H1 (cell line): ENCODE measurements at regions of chr12 and their contacts with region 1.

Region 1: GRCh38 chr12:55659486-55660385 is 23.0 kb downstream of the OR10P1 start:
- DNase-seq: no peak
- H3K4me3 ChIP-seq: no peak overlapping the region
- H3K27ac ChIP-seq: no peak overlapping the region
- H3K4me1 ChIP-seq: no peaks in the 10 kb centered on the region
- H3K27me3 ChIP-seq: no peaks in the 10 kb centered on the region; a peak in 2 of 7 replicates
- CTCF ChIP-seq: peak; percentile 46 to 68 (median 66)
- EP300 ChIP-seq: no peak
- POLR2A ChIP-seq: no peak
- RAD21 ChIP-seq: peak; percentile 80 to 86

Region 2: GRCh38 chr12:55572168-55572567 is 87.6 kb before region 1 on chr12 and contains the start of gene OR2AP1:
- CTCF ChIA-PET with region 1: no interaction called
- POLR2A ChIA-PET with region 1: no interaction called
- DNase-seq: no peak
- H3K4me3 ChIP-seq: no peak within 1 kb of the TSS
- H3K27ac ChIP-seq: no peak within 1 kb of the TSS
- H3K4me1 ChIP-seq: no peaks in the 10 kb centered on the region
- H3K27me3 ChIP-seq: no peaks in the 10 kb centered on the region
- CTCF ChIP-seq: no peak
- EP300 ChIP-seq: no peak
- POLR2A ChIP-seq: no peak
- RAD21 ChIP-seq: no peak
- total RNA-seq, gene OR2AP1: not detected in 2 replicates

Region 3: GRCh38 chr12:55629058-55629841 is 30.5 kb before region 1 on chr12:
- CTCF ChIA-PET with region 1: interaction called, 12 read pairs
- POLR2A ChIA-PET with region 1: no interaction called
- DNase-seq: no peak
- H3K4me3 ChIP-seq: no peak overlapping the region
- H3K27ac ChIP-seq: no peak overlapping the region
- H3K4me1 ChIP-seq: no peaks in the 10 kb centered on the region
- H3K27me3 ChIP-seq: no peaks in the 10 kb centered on the region
- CTCF ChIP-seq: no peak
- EP300 ChIP-seq: no peak
- POLR2A ChIP-seq: no peak
- RAD21 ChIP-seq: no peak

Region 4: DNA sequence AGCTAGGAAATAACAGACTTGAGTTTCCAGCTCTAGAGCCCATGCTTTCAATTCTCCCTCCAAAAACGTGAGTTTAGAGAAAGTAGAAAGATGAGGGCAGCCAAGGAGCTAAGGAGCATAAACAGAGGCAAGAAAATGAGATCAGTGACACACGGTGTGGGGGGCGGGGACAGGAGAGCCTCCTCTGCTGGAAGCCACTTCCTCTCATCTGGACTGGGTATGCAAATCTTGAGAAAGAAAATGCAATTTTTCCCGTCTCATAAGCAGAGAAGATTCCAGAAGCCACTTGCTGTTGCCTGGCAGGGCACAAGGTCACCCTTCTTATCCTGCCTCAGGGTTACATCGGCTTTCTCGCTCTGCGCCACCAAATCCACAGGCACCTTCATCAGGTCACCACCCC is 17.1 kb before region 1 on chr12:
- CTCF ChIA-PET with region 1: interaction called, 58 read pairs
- POLR2A ChIA-PET with region 1: no interaction called
- DNase-seq: no peak
- H3K4me3 ChIP-seq: no peak overlapping the region
- H3K27ac ChIP-seq: no peak overlapping the region
- H3K4me1 ChIP-seq: peaks cover 0 to 4% (median 3%) of the 10 kb centered on the region in 4 experiments; a peak in 4 of 7 replicates
- H3K27me3 ChIP-seq: no peaks in the 10 kb centered on the region
- CTCF ChIP-seq: no peak
- EP300 ChIP-seq: no peak
- POLR2A ChIP-seq: no peak
- RAD21 ChIP-seq: no peak

Region 5: DNA sequence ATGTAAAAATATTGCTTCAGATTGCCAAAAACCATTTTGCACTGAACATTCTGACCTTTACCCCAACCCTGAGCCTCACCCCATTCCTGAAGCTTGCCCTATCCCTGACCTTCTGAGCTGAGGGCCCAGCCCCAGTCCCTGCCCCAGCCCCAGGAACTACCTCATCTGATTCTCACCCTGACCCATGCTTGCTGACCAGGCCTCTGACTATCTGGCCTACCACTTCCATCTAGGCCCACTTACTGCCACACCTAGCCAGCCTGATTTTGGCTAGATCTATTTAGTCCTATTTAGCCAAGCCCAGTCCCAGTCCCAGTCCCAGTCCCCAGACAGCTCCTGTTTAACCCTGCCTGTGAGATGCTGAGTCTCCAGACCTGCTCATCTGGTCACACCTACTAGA is 10.5 kb after region 1 on chr12:
- CTCF ChIA-PET with region 1: interaction called, 37 read pairs
- POLR2A ChIA-PET with region 1: no interaction called
- DNase-seq: no peak
- H3K4me3 ChIP-seq: no peak overlapping the region
- H3K27ac ChIP-seq: no peak overlapping the region
- H3K4me1 ChIP-seq: no peaks in the 10 kb centered on the region
- H3K27me3 ChIP-seq: no peaks in the 10 kb centered on the region; a peak in 1 of 7 replicates
- CTCF ChIP-seq: no peak
- EP300 ChIP-seq: no peak
- POLR2A ChIP-seq: no peak
- RAD21 ChIP-seq: no peak

Region 6: DNA sequence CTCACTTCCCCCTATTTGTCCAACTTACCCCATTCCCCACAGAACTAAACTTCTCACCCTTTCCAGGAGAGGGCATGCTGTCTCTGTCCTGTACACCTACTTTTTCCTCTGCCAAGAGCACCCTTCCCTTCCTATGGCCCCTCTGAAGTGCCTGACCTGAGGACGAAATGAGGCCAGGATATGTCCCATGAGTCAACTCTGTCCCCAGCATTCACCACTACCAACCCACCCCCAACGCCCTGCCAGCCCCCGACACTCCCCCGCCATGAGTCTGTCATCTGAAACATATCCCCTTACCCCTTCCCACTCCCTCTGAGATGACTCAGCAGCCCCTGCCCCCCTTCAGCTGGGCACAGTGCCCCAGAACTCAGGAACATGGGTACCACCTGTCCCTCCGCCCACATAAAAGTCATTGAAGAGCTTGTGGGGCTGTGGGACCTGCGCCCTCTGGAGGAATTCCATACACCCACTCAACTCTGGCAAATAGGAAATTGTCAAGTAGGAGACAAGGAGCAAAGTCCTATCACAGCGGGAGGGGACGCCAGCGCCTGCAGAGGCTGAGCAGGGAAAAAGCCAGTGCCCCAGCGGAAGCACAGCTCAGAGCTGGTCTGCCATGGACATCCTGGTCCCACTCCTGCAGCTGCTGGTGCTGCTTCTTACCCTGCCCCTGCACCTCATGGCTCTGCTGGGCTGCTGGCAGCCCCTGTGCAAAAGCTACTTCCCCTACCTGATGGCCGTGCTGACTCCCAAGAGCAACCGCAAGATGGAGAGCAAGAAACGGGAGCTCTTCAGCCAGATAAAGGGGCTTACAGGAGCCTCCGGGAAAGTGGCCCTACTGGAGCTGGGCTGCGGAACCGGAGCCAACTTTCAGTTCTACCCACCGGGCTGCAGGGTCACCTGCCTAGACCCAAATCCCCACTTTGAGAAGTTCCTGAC is 21.7 kb after region 1 on chr12:
- CTCF ChIA-PET with region 1: interaction called, 13 read pairs
- POLR2A ChIA-PET with region 1: interaction called, 4 read pairs
- DNase-seq: peak; percentile 61 to 83
- H3K4me3 ChIP-seq: peak overlapping the region in 3 of 4 experiments; percentile 6 to 44 (median 21); a peak in 5 of 8 replicates
- H3K27ac ChIP-seq: no peak overlapping the region
- H3K4me1 ChIP-seq: peaks cover 0 to 12% (median 5%) of the 10 kb centered on the region in 4 experiments; a peak in 4 of 7 replicates
- H3K27me3 ChIP-seq: no peaks in the 10 kb centered on the region
- CTCF ChIP-seq: peak; percentile 60 to 68 (median 61)
- EP300 ChIP-seq: no peak
- POLR2A ChIP-seq: peak in 1 of 2 experiments; percentile 54; a peak in 2 of 3 replicates
- RAD21 ChIP-seq: peak; percentile 25 to 48; a peak in 3 of 4 replicates

Region 7: DNA sequence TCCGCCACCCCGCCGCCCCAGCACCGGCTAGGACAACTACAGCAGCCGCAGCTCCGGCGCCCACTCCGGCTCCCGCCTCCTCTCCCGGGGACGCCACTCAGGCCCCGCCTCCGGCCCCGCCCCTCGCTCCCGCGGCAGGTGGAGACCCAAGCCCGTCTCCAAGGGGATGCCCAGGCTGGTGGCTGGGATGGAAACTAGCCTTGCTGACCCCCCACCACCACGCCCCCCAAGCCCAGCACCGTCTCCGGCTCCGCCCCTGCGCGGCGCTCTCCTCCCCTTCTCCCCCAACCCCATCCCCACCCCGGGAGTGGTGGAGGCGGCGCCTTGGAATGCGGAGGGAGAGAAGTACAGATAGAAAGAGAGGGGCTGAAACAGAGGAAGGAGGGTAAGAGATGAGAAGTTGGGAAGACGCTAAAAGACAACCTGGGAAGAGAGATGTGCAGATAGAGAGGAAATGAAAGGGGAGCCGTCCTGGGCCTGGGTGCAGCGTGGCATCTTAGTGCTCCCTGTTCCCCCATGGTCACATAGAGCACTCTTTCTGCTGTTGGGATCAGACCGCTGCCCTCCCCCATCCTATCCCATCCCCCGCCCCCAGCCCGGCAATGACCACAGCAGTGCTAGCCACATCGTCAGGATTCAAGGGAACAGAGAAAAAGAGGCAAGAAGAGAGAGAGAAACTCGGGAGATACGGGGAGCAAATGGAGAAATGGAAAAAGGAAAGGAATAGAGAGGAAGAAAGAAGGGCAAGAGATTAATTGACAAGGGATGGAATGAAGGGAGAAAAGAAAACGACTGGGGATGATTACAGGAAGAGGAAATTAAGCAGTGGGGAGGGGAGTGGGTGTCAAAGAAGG is 48.3 kb after region 1 on chr12 and contains the start of gene ITGA7:
- CTCF ChIA-PET with region 1: interaction called, 17 read pairs
- POLR2A ChIA-PET with region 1: interaction called, 3 read pairs
- DNase-seq: peak; percentile 83 to 99
- H3K4me3 ChIP-seq: peak within 1 kb of the TSS; percentile 83 to 88 (median 86)
- H3K27ac ChIP-seq: 0 out of 2 replicates have a peak within 1 kb of the TSS, but pooled peaks have one; percentile 54
- H3K4me1 ChIP-seq: peaks cover 0 to 25% (median 8%) of the 10 kb centered on the region in 4 experiments; a peak in 5 of 7 replicates
- H3K27me3 ChIP-seq: peaks cover 0 to 3% (median 0%) of the 10 kb centered on the region in 4 experiments; a peak in 5 of 7 replicates
- CTCF ChIP-seq: no peak
- EP300 ChIP-seq: no peak
- POLR2A ChIP-seq: no peak
- RAD21 ChIP-seq: no peak
- total RNA-seq, gene ITGA7: 76.4 and 86.1 TPM in 2 replicates

Region 8: GRCh38 chr12:55715833-55716581 is 56.3 kb after region 1 on chr12 and contains the start of gene BLOC1S1:
- CTCF ChIA-PET with region 1: interaction called, 26 read pairs
- POLR2A ChIA-PET with region 1: interaction called, 3 read pairs
- DNase-seq: peak in 1 of 2 experiments; percentile 98
- H3K4me3 ChIP-seq: peak within 1 kb of the TSS; percentile 77 to 95 (median 87)
- H3K27ac ChIP-seq: peak within 1 kb of the TSS; percentile 63
- H3K4me1 ChIP-seq: peaks cover 10 to 26% (median 19%) of the 10 kb centered on the region in 4 experiments
- H3K27me3 ChIP-seq: no peaks in the 10 kb centered on the region; a peak in 2 of 7 replicates
- CTCF ChIP-seq: no peak
- EP300 ChIP-seq: peak in 1 of 2 experiments; percentile 85; a peak in 1 of 3 replicates
- POLR2A ChIP-seq: peak; percentile 2 to 64
- RAD21 ChIP-seq: no peak
- total RNA-seq, gene BLOC1S1: 84.3 and 91.1 TPM in 2 replicates